ENCODE measurements at regions of chr19 and their contacts with region 1.

Region 1: DNA sequence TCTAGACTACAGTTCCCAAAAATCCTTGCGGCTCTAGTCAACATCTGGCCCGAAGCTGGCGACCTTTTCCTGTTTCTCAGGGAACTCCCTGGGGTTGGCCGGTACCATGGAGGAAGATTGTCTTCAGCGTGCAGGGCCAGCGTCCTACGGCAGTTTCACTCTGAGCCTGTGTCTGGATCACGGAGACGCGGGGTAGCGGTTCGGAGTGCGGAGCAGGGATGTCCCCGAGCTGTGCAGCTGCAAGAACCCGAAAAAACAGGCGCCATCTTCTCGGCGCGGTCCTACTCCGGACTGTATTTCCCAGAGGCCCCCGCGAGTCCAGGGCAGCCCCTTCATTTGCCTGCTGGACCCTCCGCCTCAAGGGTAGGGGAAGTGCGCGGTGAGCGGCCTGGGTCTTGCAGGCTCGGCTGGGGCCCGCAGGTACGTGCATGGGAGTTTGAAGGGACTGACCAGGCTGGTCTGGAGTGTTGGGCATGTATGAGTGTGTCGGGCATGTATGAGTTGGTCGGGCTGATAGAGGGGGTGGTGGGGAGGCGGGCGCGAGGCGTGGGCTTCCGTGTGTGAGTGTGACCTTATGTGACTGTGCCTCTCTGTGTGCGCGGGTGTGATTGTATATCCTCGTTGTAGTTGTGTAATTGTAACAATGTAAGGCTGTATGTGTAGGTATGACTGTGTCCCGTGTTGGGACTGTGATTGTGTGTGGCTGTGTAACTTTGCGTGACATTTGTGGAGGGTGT is at the start of gene ZNF383:
- DNase-seq: peak; percentile 85
- ATAC-seq: peak; percentile 94
- H3K4me3 ChIP-seq: peak within 1 kb of the TSS; percentile 93 to 100
- H3K27ac ChIP-seq: peak within 1 kb of the TSS; percentile 68
- H3K4me1 ChIP-seq: peaks cover 4 to 10% of the 10 kb centered on the region in 2 experiments; a peak in 2 of 4 replicates
- H3K27me3 ChIP-seq: no peaks in the 10 kb centered on the region
- CTCF ChIP-seq: no peak
- POLR2A ChIP-seq: peak; percentile 13
- RAD21 ChIP-seq: no peak
- total RNA-seq, gene ZNF383: 6.6 TPM

Region 2: GRCh38 chr19:36139473-36140303 is 1078.3 kb before region 1 on chr19 and contains the start of gene CAPNS1:
- CTCF ChIA-PET with region 1: no interaction called
- POLR2A ChIA-PET with region 1: no interaction called
- RAD21 ChIA-PET with region 1: no interaction called
- intact Hi-C with region 1: loop called (anchors 10 kb)
- DNase-seq: peak; percentile 95
- ATAC-seq: peak; percentile 72
- H3K4me3 ChIP-seq: peak within 1 kb of the TSS; percentile 87 to 94
- H3K27ac ChIP-seq: peak within 1 kb of the TSS; percentile 98
- H3K4me1 ChIP-seq: peaks cover 47 to 61% of the 10 kb centered on the region in 2 experiments
- H3K27me3 ChIP-seq: no peaks in the 10 kb centered on the region
- CTCF ChIP-seq: peak in 1 of 3 experiments; percentile 12; a peak in 2 of 6 replicates
- POLR2A ChIP-seq: peak; percentile 58
- RAD21 ChIP-seq: no peak
- total RNA-seq, gene CAPNS1: 621 TPM

Region 3: DNA sequence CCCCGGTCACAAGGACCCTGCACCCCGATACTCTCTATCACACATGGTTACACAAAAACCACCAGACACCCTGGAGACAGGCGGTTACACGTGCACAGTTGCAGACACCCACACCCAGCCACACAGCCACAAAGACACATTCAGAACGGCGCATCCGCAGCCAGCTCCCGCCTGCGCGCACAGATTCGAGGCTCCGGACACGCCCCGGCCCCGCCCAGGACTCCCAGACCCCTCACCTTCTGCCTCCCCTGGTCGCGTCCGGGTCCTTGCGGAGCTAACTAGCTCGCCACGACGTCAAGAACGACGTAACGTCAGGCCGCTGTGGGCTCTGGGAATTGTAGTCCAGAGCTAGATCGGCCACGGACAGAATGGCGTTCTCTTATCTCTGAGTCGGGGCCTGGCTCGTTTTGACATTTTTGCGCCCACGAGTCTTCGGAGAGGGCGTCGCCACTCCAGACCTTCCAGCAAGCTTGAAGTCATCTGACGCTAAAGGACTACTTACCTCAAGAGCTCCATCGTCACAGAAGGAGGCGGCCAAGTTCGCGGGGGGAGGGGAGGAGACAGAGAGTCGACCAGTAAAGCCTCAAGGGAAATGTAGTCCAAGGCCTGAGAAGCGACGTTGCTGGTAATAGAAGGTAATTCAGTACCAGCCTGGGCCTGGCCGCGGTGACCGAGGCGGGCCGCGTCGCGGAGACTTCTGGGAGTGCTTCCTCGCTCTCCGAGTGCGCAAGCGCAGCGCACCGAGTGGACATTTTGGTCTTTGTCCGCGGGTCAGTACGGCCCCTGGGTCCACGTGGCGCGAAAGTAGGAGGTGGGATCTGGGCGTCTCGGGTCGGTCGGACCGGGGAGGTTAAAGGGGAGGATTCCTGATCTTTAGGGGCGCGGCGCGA is 1003.4 kb before region 1 on chr19 and contains the starts of genes ZNF146 and ZNF565:
- CTCF ChIA-PET with region 1: no interaction called
- POLR2A ChIA-PET with region 1: interaction called, 3 read pairs
- RAD21 ChIA-PET with region 1: no interaction called
- intact Hi-C with region 1: loop called (anchors 10 kb)
- DNase-seq: peak; percentile 97
- ATAC-seq: peak; percentile 94
- H3K4me3 ChIP-seq: peak within 1 kb of the TSS; percentile 87 to 99
- H3K27ac ChIP-seq: peak within 1 kb of the TSS; percentile 88
- H3K4me1 ChIP-seq: peaks cover 10 to 16% of the 10 kb centered on the region in 2 experiments
- H3K27me3 ChIP-seq: no peaks in the 10 kb centered on the region
- CTCF ChIP-seq: no peak
- POLR2A ChIP-seq: peak; percentile 66
- RAD21 ChIP-seq: no peak
- total RNA-seq, gene ZNF146: 105 TPM
- total RNA-seq, gene ZNF565: 3.2 TPM

Region 4: DNA sequence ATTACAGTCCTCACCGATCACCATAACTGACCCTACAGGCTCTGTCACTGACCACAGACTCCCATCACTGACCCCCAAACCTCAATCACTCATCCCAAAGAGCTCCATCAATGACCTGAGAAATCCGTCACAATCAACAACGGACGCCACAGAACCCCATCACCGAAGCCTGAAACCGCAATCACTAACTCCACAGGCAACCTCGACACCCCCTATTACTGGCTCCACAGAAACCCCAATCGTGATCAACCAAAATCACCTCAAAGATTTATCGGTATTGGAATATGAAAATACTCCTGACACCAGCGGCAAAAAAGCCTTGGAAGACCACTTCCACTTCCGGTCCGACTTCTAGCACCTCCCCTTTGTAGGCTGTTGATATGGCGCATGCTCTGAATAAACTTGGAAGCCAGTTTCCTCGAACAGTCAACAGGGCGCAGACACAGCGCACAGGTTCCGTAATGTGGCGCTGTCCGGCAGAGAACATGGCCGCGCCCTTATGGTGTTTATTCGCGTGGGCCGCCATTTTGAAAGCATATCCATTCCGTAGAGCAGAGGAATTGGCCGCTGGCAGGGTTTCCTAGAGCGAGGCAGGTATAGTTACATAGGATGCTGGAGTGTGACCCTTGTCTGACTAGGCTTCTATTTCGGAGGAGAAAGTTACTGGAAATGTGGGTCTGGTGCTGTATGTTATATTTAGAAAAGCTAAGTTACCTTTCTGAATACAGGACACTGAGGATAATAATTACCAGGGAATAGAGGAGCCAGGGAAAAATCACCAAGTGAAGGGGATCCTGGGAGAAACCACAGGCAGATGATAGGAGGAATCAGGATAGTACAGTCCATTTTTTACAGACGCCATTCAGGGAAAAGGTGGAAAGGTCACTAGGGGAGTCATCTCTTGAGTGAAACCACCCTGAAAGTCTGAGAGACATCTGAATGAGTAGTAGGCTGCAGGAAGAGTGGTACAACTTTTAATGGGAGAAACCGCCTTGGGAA is 45.4 kb before region 1 on chr19 and contains the start of gene ZNF585A:
- CTCF ChIA-PET with region 1: no interaction called
- POLR2A ChIA-PET with region 1: interaction called, 3 read pairs
- RAD21 ChIA-PET with region 1: no interaction called
- intact Hi-C with region 1: loop called (anchors 5 kb)
- DNase-seq: peak; percentile 81
- ATAC-seq: peak; percentile 97
- H3K4me3 ChIP-seq: peak within 1 kb of the TSS; percentile 56 to 66
- H3K27ac ChIP-seq: no peak within 1 kb of the TSS
- H3K4me1 ChIP-seq: no peaks in the 10 kb centered on the region
- H3K27me3 ChIP-seq: no peaks in the 10 kb centered on the region
- CTCF ChIP-seq: peak in 1 of 3 experiments; percentile 8; a peak in 1 of 6 replicates
- POLR2A ChIP-seq: no peak
- RAD21 ChIP-seq: no peak
- total RNA-seq, gene ZNF585A: 3.9 TPM

Region 5: DNA sequence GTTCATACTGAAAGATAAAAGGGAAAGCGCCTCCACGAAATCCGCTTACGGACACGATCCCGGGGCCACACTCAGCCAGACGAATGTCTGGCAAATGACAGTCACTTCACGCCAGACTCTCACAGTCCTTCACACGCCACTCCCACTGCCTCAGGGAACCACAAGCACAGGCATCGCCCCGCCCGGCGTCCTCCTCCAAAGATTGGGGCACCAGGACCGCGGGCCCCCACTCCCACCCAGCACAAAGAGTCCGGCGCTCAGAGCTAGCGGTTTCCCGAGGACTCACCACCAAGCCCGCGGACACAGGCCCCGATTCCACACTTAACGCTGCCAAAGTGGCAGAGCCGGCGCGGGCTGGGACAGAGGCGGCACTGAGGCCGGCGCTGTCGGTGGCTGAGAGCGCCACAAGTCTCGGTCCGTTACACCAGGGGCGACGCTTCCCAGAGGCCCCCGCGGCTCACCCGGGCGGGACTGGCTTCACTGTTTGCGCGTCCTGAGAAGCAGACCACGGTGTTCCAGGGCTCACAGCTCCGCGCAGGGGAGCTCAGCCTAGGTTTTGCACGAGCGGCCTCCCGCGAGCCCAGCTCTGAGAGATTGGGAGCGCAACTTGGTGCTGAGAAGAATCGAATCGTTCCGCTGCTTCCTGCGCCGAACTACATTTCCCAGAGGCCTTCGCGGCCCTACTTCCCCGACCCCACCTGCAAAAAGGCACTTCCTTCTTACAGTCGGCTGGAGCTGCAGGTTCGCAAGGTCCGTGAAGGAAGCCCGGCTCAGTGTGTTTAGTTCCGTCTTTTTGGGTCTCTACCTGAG is 249.0 kb after region 1 on chr19 and contains the start of gene ZNF569:
- CTCF ChIA-PET with region 1: no interaction called
- POLR2A ChIA-PET with region 1: no interaction called
- RAD21 ChIA-PET with region 1: no interaction called
- intact Hi-C with region 1: no loop called
- DNase-seq: no peak
- ATAC-seq: no peak
- H3K4me3 ChIP-seq: no peak within 1 kb of the TSS
- H3K27ac ChIP-seq: no peak within 1 kb of the TSS
- H3K4me1 ChIP-seq: no peaks in the 10 kb centered on the region
- H3K27me3 ChIP-seq: no peaks in the 10 kb centered on the region
- CTCF ChIP-seq: no peak
- POLR2A ChIP-seq: no peak
- RAD21 ChIP-seq: no peak
- total RNA-seq, gene ZNF569: not detected

Region 6: DNA sequence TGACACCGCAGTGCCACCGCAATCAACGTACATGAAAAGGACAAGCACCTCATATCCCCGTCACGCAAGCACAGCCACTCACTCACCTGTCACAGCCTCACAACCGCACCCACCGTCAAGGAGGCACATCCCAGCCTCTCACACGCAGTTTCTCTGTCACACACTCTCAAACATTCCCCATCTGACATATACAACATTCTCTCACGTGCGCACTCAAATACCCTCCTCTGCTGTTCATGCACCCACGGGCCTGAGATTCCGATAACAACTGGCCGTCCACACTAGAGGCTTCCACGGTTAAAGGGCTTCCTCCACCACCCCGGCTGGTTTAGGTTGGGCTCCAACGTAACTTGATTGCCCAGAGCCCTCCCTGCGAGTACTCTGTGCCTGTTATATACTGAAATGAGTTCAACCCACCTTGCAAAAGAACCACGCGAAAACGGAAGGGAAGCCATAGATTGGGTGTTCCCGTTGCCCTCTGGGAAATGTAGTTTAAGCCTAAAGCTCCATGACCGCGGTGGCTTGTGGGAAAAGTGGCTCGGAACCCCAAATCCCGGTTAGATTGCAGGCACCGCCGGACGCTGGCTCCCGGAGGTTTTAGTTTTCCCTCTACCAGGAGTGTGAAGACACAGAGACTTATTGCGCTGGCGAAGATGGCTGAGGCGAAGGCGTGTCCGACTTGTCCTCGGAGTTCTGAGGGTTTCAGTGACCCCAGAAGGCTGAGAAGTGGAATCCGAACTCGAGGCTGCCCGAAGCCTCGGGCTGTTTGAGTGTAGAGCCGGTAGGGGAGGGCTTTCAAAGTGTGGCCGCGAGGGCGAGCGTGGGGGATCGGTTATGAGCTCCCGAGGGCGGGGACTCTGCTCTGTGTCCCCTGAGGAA is 561.3 kb after region 1 on chr19 and contains the start of gene ZNF573:
- CTCF ChIA-PET with region 1: no interaction called
- POLR2A ChIA-PET with region 1: no interaction called
- RAD21 ChIA-PET with region 1: no interaction called
- intact Hi-C with region 1: loop called (anchors 10 kb)
- DNase-seq: peak; percentile 84
- ATAC-seq: peak; percentile 91
- H3K4me3 ChIP-seq: peak within 1 kb of the TSS; percentile 75 to 90
- H3K27ac ChIP-seq: peak within 1 kb of the TSS; percentile 67
- H3K4me1 ChIP-seq: peaks cover 2 to 12% of the 10 kb centered on the region in 2 experiments; a peak in 2 of 4 replicates
- H3K27me3 ChIP-seq: no peaks in the 10 kb centered on the region
- CTCF ChIP-seq: no peak
- POLR2A ChIP-seq: no peak
- RAD21 ChIP-seq: no peak
- total RNA-seq, gene ZNF573: 2.4 TPM

Measured in HCT116 (cell line).